Activated CD8-positive, alpha-beta T cell treated with anti-CD3 and anti-CD28 coated beads for 36 hours (primary cell): ENCODE measurements at regions of chr17 and their contacts with region 1.

Region 1: GRCh38 chr17:2070241-2071023 is 15.5 kb downstream of the HIC1 start:
- DNase-seq: peak; percentile 93
- ATAC-seq: peak; percentile 85
- H3K4me3 Mint-ChIP-seq: peak overlapping the region; percentile 21
- H3K27ac Mint-ChIP-seq: peak overlapping the region; percentile 80
- H3K4me1 Mint-ChIP-seq: peaks cover 48% of the 10 kb centered on the region
- H3K27me3 Mint-ChIP-seq: no peaks in the 10 kb centered on the region
- CTCF ChIP-seq: no peak

Region 2: GRCh38 chr17:1928976-1929375 is 141.5 kb before region 1 on chr17:
- CTCF ChIA-PET with region 1: no interaction called
- POLR2A ChIA-PET with region 1: no interaction called
- intact Hi-C with region 1: no loop called
- DNase-seq: no peak
- ATAC-seq: no peak
- H3K4me3 Mint-ChIP-seq: no peak overlapping the region
- H3K27ac Mint-ChIP-seq: no peak overlapping the region
- H3K4me1 Mint-ChIP-seq: no peaks in the 10 kb centered on the region
- H3K27me3 Mint-ChIP-seq: peaks cover 2% of the 10 kb centered on the region
- CTCF ChIP-seq: no peak

Region 3: DNA sequence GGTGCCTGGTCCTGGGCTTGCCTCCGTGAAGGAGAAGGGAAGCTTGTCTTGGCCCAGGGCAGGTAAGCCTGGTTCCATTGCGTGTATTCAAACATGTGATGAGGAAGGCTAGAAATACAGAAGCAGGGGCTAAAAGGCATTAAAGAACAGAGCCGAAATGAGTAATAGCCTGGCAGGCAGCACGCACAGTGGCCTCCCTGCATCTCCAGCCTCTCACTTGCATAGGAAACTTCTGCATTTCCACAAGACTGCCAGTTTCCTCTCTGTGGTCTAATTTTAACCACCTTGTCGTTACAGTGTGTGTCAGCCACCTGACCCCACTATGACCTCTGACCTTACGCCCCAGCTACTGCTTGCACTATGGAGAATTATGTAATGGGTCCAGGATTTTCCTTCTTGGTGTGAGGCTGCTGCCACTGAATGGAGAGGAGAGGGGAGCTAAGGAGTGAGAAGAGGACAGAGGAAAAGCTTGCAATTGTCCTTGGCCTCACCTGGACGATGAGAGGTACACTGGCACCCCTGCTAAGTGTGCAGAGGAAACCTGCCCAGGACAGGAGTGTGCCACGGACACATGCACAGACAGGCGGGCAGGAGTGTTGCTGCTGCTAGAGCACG is 17.3 kb after region 1 on chr17:
- CTCF ChIA-PET with region 1: interaction called, 12 read pairs
- POLR2A ChIA-PET with region 1: interaction called, 14 read pairs
- intact Hi-C with region 1: loop called (anchors 2 kb)
- DNase-seq: peak; percentile 87
- ATAC-seq: peak; percentile 59
- H3K4me3 Mint-ChIP-seq: no peak overlapping the region
- H3K27ac Mint-ChIP-seq: peak overlapping the region; percentile 58
- H3K4me1 Mint-ChIP-seq: peaks cover 74% of the 10 kb centered on the region
- H3K27me3 Mint-ChIP-seq: no peaks in the 10 kb centered on the region
- CTCF ChIP-seq: no peak

Region 4: DNA sequence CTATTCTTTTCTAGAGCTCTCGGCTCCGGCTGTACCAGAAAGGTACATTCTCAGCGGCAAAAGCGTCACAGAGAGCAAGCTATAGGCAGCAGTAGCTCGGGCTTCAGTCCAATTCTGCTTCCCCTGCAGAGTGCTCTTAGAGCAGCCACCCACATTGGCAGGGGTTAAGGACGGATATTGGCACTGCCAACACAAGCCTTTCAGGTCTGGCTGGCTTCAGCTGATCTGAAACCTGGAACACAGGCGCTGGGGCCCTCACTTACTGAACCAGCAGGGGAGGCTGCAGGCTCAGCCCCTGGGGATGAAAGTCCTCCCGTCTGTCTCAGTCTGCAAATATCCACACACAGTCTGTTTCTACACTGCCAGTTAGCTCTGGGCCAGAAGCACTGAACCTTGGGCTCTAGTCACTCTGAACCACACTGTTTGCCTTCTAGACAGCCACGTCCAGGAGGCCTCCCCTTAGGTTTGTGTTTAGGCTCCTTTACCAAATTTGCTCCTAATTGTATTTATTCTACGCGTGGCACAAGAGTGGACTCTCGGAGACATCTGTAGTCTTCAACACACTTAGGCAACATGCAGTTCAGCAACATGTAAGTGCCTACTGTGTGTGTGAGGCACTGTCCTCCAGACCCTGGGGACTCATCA is 24.6 kb after region 1 on chr17:
- CTCF ChIA-PET with region 1: interaction called, 12 read pairs
- POLR2A ChIA-PET with region 1: interaction called, 5 read pairs
- intact Hi-C with region 1: no loop called
- DNase-seq: no peak
- ATAC-seq: peak; percentile 22
- H3K4me3 Mint-ChIP-seq: no peak overlapping the region
- H3K27ac Mint-ChIP-seq: no peak overlapping the region
- H3K4me1 Mint-ChIP-seq: peaks cover 18% of the 10 kb centered on the region
- H3K27me3 Mint-ChIP-seq: no peaks in the 10 kb centered on the region
- CTCF ChIP-seq: no peak

Region 5: DNA sequence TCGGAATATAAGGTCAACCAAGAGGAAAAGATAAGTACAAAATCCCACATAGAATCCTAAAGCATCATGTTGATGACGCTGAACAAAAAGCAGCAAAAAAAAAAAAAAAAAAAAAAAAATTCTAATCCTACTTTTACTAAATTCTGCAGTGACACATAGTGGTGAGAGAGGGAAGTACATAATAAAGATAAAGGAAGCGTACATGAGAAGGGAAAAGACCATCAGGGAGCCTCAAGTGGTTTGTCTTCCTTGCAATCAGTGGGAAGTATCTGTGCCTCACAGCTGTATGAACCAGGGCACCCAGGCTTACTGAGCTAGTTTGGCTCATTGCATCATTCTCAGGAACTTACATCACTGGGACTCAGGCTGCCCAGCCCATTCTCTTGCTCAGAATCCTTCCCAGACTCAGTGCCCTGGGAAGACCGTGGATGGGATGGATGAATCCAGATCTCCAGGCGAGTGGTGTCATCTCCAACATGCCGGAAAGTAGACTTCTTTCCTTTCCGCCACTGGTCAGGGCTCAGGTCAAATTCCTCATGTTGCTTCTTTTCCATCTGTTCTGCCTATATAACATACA is 212.0 kb after region 1 on chr17:
- CTCF ChIA-PET with region 1: interaction called, 10 read pairs
- POLR2A ChIA-PET with region 1: no interaction called
- intact Hi-C with region 1: no loop called
- DNase-seq: no peak
- ATAC-seq: peak; percentile 81
- H3K4me3 Mint-ChIP-seq: no peak overlapping the region
- H3K27ac Mint-ChIP-seq: peak overlapping the region; percentile 77
- H3K4me1 Mint-ChIP-seq: peaks cover 33% of the 10 kb centered on the region
- H3K27me3 Mint-ChIP-seq: no peaks in the 10 kb centered on the region
- CTCF ChIP-seq: peak; percentile 73